H1 (cell line): ENCODE measurements at regions of chr19 and their contacts with region 1.

Region 1: DNA sequence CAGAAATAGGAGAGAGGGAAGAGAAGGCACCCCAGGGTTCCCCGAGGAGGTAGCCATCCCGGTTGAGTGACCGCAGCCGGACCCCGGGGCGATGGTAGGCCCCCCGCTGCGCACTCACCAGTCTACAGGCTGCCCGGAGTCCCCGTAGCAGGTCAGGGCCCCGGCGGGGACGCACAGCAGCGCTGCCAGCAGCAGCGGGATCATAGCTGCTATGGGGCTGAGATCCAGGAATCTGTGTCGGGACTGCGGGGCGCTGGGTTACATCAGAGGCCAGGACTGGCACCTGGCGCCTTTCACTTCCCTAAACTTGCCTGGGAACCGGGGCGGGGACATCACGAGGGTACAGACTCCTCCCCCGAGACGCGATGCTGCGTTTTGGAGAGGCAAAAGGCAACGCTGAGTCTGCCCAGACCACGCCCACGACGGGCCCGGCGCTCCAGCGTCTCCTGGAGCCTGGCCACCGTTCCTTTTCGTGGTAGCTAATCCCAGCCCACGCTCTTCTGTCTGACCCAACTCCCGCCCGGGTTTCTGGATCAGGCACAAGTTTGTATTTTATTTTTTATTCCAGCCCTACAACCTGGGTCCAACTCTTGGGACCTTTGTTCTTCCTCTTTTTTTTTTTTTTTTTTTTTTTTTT is at the start of gene DNASE2:
- DNase-seq: peak; percentile 85 to 95
- H3K4me3 ChIP-seq: peak within 1 kb of the TSS; percentile 85 to 92 (median 88)
- H3K27ac ChIP-seq: peak within 1 kb of the TSS; percentile 20; the same call in 1 of the 2 replicates
- H3K4me1 ChIP-seq: peaks cover 0 to 7% (median 6%) of the 10 kb centered on the region in 4 experiments; a peak in 5 of 7 replicates
- H3K27me3 ChIP-seq: peaks cover 0 to under 1% (median under 1%) of the 10 kb centered on the region in 4 experiments; a peak in 1 of 7 replicates
- CTCF ChIP-seq: no peak
- EP300 ChIP-seq: peak in 1 of 2 experiments; percentile 15; a peak in 1 of 3 replicates
- POLR2A ChIP-seq: peak in 1 of 2 experiments; percentile 78; a peak in 2 of 3 replicates
- RAD21 ChIP-seq: no peak
- total RNA-seq, gene DNASE2: 32.9 and 33.2 TPM in 2 replicates

Region 2: DNA sequence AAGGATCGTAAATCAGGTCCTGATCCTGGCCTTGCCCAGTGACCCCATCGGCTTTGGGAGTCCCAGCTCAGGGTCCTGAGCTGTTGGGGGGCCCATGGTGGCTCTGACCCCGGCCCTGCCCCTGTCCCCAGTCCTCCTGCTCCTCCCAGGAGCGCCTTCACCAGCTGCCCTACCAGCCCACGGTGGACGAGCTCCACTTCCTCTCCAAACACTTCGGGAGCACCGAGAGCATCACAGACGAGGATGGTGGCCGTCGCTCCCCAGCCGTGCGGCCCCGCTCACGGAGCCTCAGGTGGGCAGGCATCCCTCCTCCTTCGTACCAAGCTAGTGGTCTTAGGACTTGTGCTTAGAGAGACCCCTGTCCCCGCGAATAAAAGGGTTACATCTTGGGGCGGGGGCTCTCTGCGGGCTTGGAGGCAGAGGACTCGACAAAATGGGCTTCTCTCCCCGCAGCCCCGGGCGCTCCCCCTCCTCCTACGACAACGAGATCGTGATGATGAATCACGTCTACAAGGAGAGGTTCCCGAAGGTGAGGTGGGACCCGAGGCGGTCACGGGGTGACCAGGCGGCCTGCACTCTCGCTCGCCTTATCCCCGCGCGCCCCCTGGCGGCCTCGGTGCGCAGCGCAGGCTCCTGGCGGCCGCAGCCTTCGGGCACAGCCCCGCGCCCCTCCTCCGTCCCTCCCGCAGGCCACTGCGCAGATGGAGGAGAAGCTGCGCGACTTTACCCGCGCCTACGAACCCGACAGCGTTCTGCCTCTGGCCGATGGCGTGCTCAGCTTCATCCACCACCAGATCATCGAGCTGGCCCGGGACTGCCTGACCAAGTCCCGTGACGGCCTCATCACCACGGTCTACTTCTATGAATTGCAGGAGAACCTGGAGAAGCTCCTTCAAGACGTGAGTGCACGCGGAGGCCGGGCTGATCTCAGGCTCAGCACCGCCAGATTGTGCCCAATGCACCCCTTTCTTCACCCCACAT is 33.8 kb before region 1 on chr19:
- CTCF ChIA-PET with region 1: interaction called, 19 read pairs
- POLR2A ChIA-PET with region 1: interaction called, 9 read pairs
- DNase-seq: peak in 1 of 2 experiments; percentile 100
- H3K4me3 ChIP-seq: peak overlapping the region in 2 of 4 experiments; percentile 26 to 47; a peak in 4 of 8 replicates
- H3K27ac ChIP-seq: no peak overlapping the region
- H3K4me1 ChIP-seq: peaks cover 0 to 10% (median 3%) of the 10 kb centered on the region in 4 experiments; a peak in 5 of 7 replicates
- H3K27me3 ChIP-seq: no peaks in the 10 kb centered on the region
- CTCF ChIP-seq: peak; percentile 96 to 99 (median 99)
- EP300 ChIP-seq: no peak
- POLR2A ChIP-seq: no peak
- RAD21 ChIP-seq: peak; percentile 92 to 94

Region 3: GRCh38 chr19:12864721-12865715 is 16.3 kb before region 1 on chr19:
- CTCF ChIA-PET with region 1: interaction called, 7 read pairs
- POLR2A ChIA-PET with region 1: interaction called, 34 read pairs
- DNase-seq: no peak
- H3K4me3 ChIP-seq: no peak overlapping the region
- H3K27ac ChIP-seq: no peak overlapping the region
- H3K4me1 ChIP-seq: peaks cover 3 to 17% (median 14%) of the 10 kb centered on the region in 4 experiments
- H3K27me3 ChIP-seq: no peaks in the 10 kb centered on the region
- CTCF ChIP-seq: no peak
- EP300 ChIP-seq: no peak
- POLR2A ChIP-seq: no peak
- RAD21 ChIP-seq: no peak

Region 4: GRCh38 chr19:12913011-12913561 is 31.8 kb after region 1 on chr19:
- CTCF ChIA-PET with region 1: interaction called, 8 read pairs
- POLR2A ChIA-PET with region 1: interaction called, 24 read pairs
- DNase-seq: peak in 1 of 2 experiments; percentile 70
- H3K4me3 ChIP-seq: peak overlapping the region in 2 of 4 experiments; percentile 32 to 33; a peak in 3 of 8 replicates
- H3K27ac ChIP-seq: peak overlapping the region; percentile 42; the same call in 1 of the 2 replicates
- H3K4me1 ChIP-seq: peaks cover 8 to 20% (median 14%) of the 10 kb centered on the region in 4 experiments
- H3K27me3 ChIP-seq: peaks cover 1 to 3% (median 2%) of the 10 kb centered on the region in 4 experiments
- CTCF ChIP-seq: no peak
- EP300 ChIP-seq: no peak
- POLR2A ChIP-seq: no peak; a peak in 1 of 3 replicates
- RAD21 ChIP-seq: no peak

Region 5: GRCh38 chr19:12938234-12939025 is 57.1 kb after region 1 on chr19 and contains the start of gene CALR:
- CTCF ChIA-PET with region 1: interaction called, 5 read pairs
- POLR2A ChIA-PET with region 1: interaction called, 21 read pairs
- DNase-seq: peak; percentile 91 to 98
- H3K4me3 ChIP-seq: peak within 1 kb of the TSS; percentile 68 to 97 (median 93)
- H3K27ac ChIP-seq: peak within 1 kb of the TSS; percentile 32; the same call in 1 of the 2 replicates
- H3K4me1 ChIP-seq: peaks cover 0 to 23% (median 13%) of the 10 kb centered on the region in 4 experiments; a peak in 6 of 7 replicates
- H3K27me3 ChIP-seq: no peaks in the 10 kb centered on the region
- CTCF ChIP-seq: no peak
- EP300 ChIP-seq: no peak
- POLR2A ChIP-seq: peak; percentile 98 to 99
- RAD21 ChIP-seq: no peak
- total RNA-seq, gene CALR: 1,155 and 1,177 TPM in 2 replicates

Region 6: GRCh38 chr19:12945479-12946091 is 64.3 kb after region 1 on chr19 and contains the start of gene RAD23A:
- CTCF ChIA-PET with region 1: interaction called, 4 read pairs
- POLR2A ChIA-PET with region 1: interaction called, 18 read pairs
- DNase-seq: peak; percentile 96 to 99
- H3K4me3 ChIP-seq: peak within 1 kb of the TSS; percentile 77 to 93 (median 90)
- H3K27ac ChIP-seq: peak within 1 kb of the TSS; percentile 96
- H3K4me1 ChIP-seq: peaks cover 0 to 3% (median under 1%) of the 10 kb centered on the region in 4 experiments; a peak in 1 of 7 replicates
- H3K27me3 ChIP-seq: no peaks in the 10 kb centered on the region
- CTCF ChIP-seq: peak in 1 of 3 experiments; percentile 2; a peak in 1 of 4 replicates
- EP300 ChIP-seq: no peak
- POLR2A ChIP-seq: peak; percentile 98
- RAD21 ChIP-seq: no peak
- total RNA-seq, gene RAD23A: 73.3 and 76.1 TPM in 2 replicates

Region 7: GRCh38 chr19:12956446-12957388 is 75.4 kb after region 1 on chr19 and contains the start of gene GADD45GIP1:
- CTCF ChIA-PET with region 1: no interaction called
- POLR2A ChIA-PET with region 1: interaction called, 39 read pairs
- DNase-seq: peak; percentile 38 to 89
- H3K4me3 ChIP-seq: peak within 1 kb of the TSS; percentile 82 to 91 (median 88)
- H3K27ac ChIP-seq: peak within 1 kb of the TSS; percentile 94
- H3K4me1 ChIP-seq: peaks cover 0 to 4% (median 2%) of the 10 kb centered on the region in 4 experiments; a peak in 3 of 7 replicates
- H3K27me3 ChIP-seq: no peaks in the 10 kb centered on the region
- CTCF ChIP-seq: no peak
- EP300 ChIP-seq: no peak
- POLR2A ChIP-seq: peak; percentile 96 to 97
- RAD21 ChIP-seq: no peak
- total RNA-seq, gene GADD45GIP1: 42.2 and 45.5 TPM in 2 replicates